Activated B cell treated with CpG ODN at 0.5 μM for 24 hours (primary cell): ENCODE measurements at regions of chr7 and their contacts with region 1.

Region 1: GRCh38 chr7:116862234-116862950 is at the start of gene CAPZA2:
- DNase-seq: peak; percentile 98
- ATAC-seq: peak; percentile 87
- H3K4me3 Mint-ChIP-seq: peak within 1 kb of the TSS; percentile 98
- H3K27ac Mint-ChIP-seq: peak within 1 kb of the TSS; percentile 93
- H3K4me1 Mint-ChIP-seq: peaks cover 39% of the 10 kb centered on the region
- H3K27me3 Mint-ChIP-seq: peaks cover 5% of the 10 kb centered on the region
- CTCF ChIP-seq: no peak
- total RNA-seq, gene CAPZA2: 101 and 110 TPM in 2 replicates

Region 2: GRCh38 chr7:116843378-116843777 is 19.0 kb before region 1 on chr7:
- CTCF ChIA-PET with region 1: no interaction called
- POLR2A ChIA-PET with region 1: no interaction called
- intact Hi-C with region 1: loop called (anchors 1 kb)
- DNase-seq: no peak
- ATAC-seq: peak; percentile 71
- H3K4me3 Mint-ChIP-seq: peak overlapping the region; percentile 72
- H3K27ac Mint-ChIP-seq: peak overlapping the region; percentile 59
- H3K4me1 Mint-ChIP-seq: peaks cover 28% of the 10 kb centered on the region
- H3K27me3 Mint-ChIP-seq: no peaks in the 10 kb centered on the region
- CTCF ChIP-seq: no peak

Region 3: DNA sequence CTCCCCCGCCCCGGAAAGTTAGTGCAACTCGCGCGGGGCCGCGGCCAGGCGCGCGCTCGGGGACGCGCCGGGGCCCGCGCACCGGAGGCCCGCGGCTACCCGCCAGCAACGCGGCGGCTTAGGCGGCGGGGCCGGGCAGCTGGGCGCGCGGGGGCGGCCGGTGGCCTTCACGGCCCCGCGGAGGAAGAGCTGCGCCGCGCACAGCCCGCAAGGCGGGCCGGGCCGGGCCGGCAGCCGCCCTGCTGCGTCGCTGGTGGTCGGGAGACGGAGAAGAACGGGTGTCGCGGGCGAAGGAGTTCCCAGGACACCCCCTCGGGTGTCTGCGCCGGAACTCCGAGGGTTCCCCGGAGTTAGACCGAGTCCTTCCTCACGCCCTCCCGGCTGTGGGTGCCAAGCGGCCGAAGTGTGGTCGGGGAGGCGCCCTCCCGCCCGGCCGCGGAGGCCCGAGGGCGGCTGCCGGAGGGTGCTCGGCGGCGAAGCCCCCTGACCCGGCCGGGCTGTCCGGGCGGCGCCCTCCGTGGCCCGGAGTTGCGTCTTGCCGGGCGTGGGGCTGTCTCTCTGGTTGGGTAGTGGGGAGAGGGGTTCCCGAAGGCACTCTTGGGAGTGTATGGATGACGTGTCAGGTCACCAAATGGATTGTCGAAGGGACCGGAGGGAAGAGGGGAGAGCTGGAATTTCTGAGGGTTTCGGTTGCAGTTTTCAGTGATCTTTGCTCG is 91.5 kb after region 1 on chr7:
- CTCF ChIA-PET with region 1: no interaction called
- POLR2A ChIA-PET with region 1: no interaction called
- intact Hi-C with region 1: loop called (anchors 1 kb)
- DNase-seq: peak; percentile 60
- ATAC-seq: peak; percentile 59
- H3K4me3 Mint-ChIP-seq: peak overlapping the region; percentile 93
- H3K27ac Mint-ChIP-seq: peak overlapping the region; percentile 86
- H3K4me1 Mint-ChIP-seq: peaks cover 27% of the 10 kb centered on the region
- H3K27me3 Mint-ChIP-seq: no peaks in the 10 kb centered on the region
- CTCF ChIP-seq: no peak

Region 4: GRCh38 chr7:117230276-117231046 is 368.1 kb after region 1 on chr7:
- CTCF ChIA-PET with region 1: no interaction called
- POLR2A ChIA-PET with region 1: no interaction called
- intact Hi-C with region 1: no loop called
- DNase-seq: no peak
- ATAC-seq: peak; percentile 37
- H3K4me3 Mint-ChIP-seq: no peak overlapping the region
- H3K27ac Mint-ChIP-seq: no peak overlapping the region
- H3K4me1 Mint-ChIP-seq: no peaks in the 10 kb centered on the region
- H3K27me3 Mint-ChIP-seq: no peaks in the 10 kb centered on the region
- CTCF ChIP-seq: no peak